Dorsolateral prefrontal cortex (tissue), 120 donors: ENCODE measurements at regions of chr14 and their contacts with region 1.

Region 1: DNA sequence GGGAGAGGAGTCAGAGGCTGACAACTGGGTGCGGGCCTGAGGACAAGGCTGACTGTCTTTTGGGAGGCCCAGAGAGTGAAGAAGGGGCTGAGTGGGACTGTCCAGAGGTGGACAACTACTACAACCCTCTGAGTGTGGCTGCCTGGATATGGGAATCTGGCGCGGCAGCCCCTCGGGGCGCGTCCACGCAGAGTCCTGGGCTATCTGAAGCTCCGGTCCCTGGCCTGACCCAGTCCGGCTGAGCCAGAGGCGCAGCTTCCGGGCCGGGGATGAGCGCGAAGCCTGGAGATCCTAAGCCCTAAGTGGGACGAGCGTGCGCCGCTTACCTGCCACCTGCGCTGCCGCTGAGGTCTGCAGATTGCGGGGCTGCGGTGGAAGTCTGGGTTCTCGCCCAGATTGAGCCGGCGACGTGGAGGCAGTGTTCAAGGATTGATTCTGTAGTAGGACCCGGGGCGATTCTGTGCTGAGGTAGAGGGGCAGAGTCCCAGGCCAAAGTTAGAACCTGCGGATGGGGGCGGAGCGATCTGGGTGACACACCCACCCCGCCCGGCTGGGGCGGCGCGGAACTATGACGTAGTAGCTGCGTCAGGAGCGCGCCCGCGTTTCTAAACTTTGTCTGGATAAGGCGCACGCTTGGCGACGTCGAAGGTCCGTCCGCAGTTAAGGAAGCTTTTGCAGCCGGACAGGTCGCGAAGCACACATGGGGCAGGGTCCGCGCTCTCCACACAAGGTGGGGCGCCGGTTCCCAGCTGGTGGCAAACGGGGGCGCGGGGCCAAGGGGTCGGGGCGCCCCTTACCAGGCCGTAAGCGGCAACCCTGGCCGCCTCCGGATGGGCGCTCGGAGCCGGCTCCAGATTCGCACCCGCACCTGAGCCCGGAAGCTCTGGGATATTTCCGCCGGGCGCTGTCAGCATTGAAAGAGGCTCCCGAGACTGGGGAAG is at the starts of genes DHRS1 and NOP9:
- DNase-seq: peak; percentile 87 to 95 (median 92)
- H3K4me3 ChIP-seq: peak within 1 kb of the TSS; percentile 68 to 100 (median 96)
- H3K27ac ChIP-seq: peak within 1 kb of the TSS in 52 of 59 donors; percentile 13 to 91 (median 76)
- H3K27me3 ChIP-seq: no peaks in the 10 kb centered on the region
- CTCF ChIP-seq: peak in 34 of 56 donors; percentile 8 to 62 (median 30)
- total RNA-seq, gene DHRS1: 14.1 to 34.4 (median 22.4) TPM
- total RNA-seq, gene NOP9: 21.2 to 33.3 (median 26.9) TPM

Region 2: GRCh38 chr14:23916004-23916403 is 383.5 kb before region 1 on chr14:
- intact Hi-C with region 1: no loop called
- DNase-seq: no peak
- H3K4me3 ChIP-seq: no peak overlapping the region
- H3K27ac ChIP-seq: no peak overlapping the region
- H3K27me3 ChIP-seq: no peaks in the 10 kb centered on the region
- CTCF ChIP-seq: no peak

Region 3: GRCh38 chr14:24271134-24271833 is 28.2 kb before region 1 on chr14 and contains the start of gene RABGGTA:
- intact Hi-C with region 1: loop called in 1 of 2 experiments (anchors 2 kb)
- DNase-seq: peak; percentile 65 to 90 (median 80)
- H3K4me3 ChIP-seq: peak within 1 kb of the TSS; percentile 65 to 100 (median 94)
- H3K27ac ChIP-seq: peak within 1 kb of the TSS; percentile 75 to 100 (median 98)
- H3K27me3 ChIP-seq: no peaks in the 10 kb centered on the region
- CTCF ChIP-seq: peak; percentile 66 to 94 (median 86)
- total RNA-seq, gene RABGGTA: 22.9 to 63.2 (median 35.7) TPM